Gastrocnemius medialis (tissue), 4 donors: ENCODE measurements at regions of chr5 and their contacts with region 1.

Region 1: DNA sequence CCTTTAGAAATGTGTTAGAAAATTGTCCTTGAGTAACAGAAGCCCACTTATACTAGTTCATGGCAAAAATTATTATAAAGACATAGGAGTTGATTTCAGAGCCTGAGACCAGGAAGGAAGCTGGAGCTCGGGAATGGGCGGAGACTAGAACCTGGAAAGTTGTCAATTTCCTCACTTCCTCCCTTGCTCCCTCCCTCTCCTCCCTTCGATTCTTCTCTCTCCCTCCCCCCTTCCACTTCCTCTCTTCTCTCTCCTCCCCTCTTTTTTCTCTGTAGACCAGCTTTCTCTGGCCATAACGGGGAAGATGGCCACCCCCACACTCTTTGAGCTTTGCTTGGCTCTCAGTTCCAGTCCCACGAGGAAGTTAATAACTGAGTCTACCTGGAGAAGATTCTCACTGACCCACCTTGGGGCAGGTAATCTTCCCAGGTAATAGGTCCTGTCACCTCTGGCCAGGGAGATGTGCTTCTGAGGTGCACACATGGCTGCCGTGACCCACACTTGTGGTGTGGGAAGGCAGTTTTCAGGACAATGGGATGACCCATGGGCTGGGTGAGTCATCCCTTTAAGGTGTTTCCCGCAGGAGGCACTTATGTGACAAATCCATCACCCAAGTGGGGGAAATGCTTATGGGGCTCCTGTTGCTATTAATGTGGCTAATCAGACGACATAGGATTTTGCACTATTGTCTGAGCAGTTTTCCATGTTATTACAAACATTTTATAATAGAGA is 78.7 kb downstream of the HSPA4 start:
- DNase-seq: no peak
- ATAC-seq: no peak
- H3K4me3 ChIP-seq: no peak overlapping the region
- H3K27ac ChIP-seq: no peak overlapping the region
- H3K4me1 ChIP-seq: peaks cover under 1 to 4% of the 10 kb centered on the region in 2 donors
- H3K27me3 ChIP-seq: no peaks in the 10 kb centered on the region
- CTCF ChIP-seq: no peak
- POLR2A ChIP-seq: no peak

Region 2: GRCh38 chr5:133086366-133086875 is 44.1 kb before region 1 on chr5:
- in situ Hi-C with region 1: no loop called
- intact Hi-C with region 1: no loop called
- DNase-seq: no peak
- ATAC-seq: no peak
- H3K4me3 ChIP-seq: no peak overlapping the region
- H3K27ac ChIP-seq: no peak overlapping the region
- H3K4me1 ChIP-seq: no peaks in the 10 kb centered on the region
- H3K27me3 ChIP-seq: no peaks in the 10 kb centered on the region
- CTCF ChIP-seq: no peak
- POLR2A ChIP-seq: no peak

Region 3: DNA sequence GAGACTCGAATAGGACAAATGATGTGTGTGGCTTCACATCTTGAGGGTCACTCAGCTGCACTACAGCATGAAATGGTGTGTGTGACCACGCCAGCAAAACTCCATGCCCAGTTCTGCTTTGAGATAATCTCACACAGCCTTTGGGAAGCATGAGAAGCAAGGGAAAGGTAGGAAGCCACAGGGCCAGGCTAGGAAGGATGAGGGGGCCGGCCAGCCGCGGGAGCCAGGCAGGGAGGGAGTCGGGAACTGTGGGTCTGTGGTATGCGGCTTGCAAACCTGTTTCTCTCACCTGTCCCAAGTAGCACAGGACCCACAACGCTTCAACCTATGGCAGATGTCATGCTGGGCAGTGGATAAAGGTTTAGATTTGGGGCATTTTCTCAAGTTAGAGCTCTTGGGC is 63.2 kb after region 1 on chr5:
- in situ Hi-C with region 1: no loop called
- intact Hi-C with region 1: no loop called
- DNase-seq: no peak
- ATAC-seq: no peak
- H3K4me3 ChIP-seq: no peak overlapping the region
- H3K27ac ChIP-seq: no peak overlapping the region
- H3K4me1 ChIP-seq: no peaks in the 10 kb centered on the region
- H3K27me3 ChIP-seq: no peaks in the 10 kb centered on the region
- CTCF ChIP-seq: no peak
- POLR2A ChIP-seq: no peak

Region 4: DNA sequence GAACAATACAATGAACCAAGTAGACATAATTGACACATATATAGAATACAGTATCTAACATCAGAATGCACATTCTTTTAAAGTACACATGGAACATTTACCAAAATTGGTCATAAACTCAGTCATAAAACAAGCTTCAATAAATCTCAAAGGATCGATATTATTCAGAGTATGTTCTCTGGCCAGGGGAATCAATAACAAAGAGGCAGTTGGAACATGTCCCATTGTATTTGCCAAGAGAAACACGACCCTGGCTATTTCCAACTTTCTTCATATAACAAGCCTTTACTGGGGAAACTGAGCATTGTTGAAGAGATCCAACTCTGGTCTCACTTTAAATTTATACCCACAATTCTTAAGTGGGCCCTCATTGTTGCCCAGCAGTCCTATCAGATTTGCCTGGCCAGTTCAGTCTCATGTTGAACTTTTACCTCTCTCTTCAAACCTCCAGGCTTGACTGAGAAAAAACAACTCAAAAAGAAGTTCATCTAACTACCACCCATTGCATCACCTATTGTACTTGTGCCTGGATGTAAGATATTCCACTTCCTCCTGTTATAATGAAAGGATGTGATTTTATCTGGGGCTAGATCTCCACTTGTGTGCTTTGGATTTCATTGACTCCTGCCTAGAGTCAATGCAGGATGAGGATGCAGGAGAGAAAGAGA is 83.7 kb after region 1 on chr5:
- in situ Hi-C with region 1: no loop called
- intact Hi-C with region 1: no loop called
- DNase-seq: no peak
- ATAC-seq: no peak
- H3K4me3 ChIP-seq: no peak overlapping the region
- H3K27ac ChIP-seq: no peak overlapping the region
- H3K4me1 ChIP-seq: no peaks in the 10 kb centered on the region
- H3K27me3 ChIP-seq: no peaks in the 10 kb centered on the region
- CTCF ChIP-seq: no peak
- POLR2A ChIP-seq: no peak

Region 5: GRCh38 chr5:133225671-133226152 is 95.2 kb after region 1 on chr5:
- in situ Hi-C with region 1: no loop called
- intact Hi-C with region 1: loop called (anchors 1 kb)
- DNase-seq: peak; percentile 66 to 87
- ATAC-seq: peak; percentile 96
- H3K4me3 ChIP-seq: no peak overlapping the region
- H3K27ac ChIP-seq: peak overlapping the region; percentile 69 to 84 (median 75)
- H3K4me1 ChIP-seq: peaks cover 8 to 13% of the 10 kb centered on the region in 2 donors
- H3K27me3 ChIP-seq: no peaks in the 10 kb centered on the region
- CTCF ChIP-seq: no peak
- POLR2A ChIP-seq: no peak